Transverse colon (tissue), 4 donors: ENCODE measurements at regions of chr6 and their contacts with region 1.

Region 1: DNA sequence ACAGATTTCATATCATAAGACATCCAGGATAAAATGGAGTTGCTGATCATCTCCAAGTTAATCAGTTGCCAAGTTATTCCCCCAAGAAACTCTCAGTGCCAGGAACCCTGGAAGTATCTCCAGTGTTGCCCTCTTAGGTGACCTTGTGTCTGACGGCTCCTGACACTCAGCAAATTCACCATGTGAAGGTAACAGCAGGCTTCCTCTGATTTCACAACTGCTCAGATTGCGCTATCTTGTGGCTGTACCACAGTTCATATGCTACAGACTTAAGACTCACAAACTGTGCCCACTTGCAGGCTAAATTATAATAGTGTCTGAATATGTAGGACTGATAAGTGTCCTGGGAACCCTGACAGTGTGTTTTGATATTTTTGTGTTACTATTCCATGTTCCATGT is 186.6 kb upstream of the OPRM1 start:
- DNase-seq: no peak
- H3K4me3 ChIP-seq: no peak overlapping the region
- H3K27ac ChIP-seq: no peak overlapping the region
- H3K4me1 ChIP-seq: no peaks in the 10 kb centered on the region
- H3K27me3 ChIP-seq: no peaks in the 10 kb centered on the region
- CTCF ChIP-seq: no peak
- EP300 ChIP-seq: no peak
- POLR2A ChIP-seq: no peak

Region 2: GRCh38 chr6:153862927-153863326 is 10.4 kb after region 1 on chr6:
- in situ Hi-C with region 1: no loop called
- intact Hi-C with region 1: loop called (anchors 1 kb)
- DNase-seq: no peak
- H3K4me3 ChIP-seq: no peak overlapping the region
- H3K27ac ChIP-seq: no peak overlapping the region
- H3K4me1 ChIP-seq: no peaks in the 10 kb centered on the region
- H3K27me3 ChIP-seq: no peaks in the 10 kb centered on the region
- CTCF ChIP-seq: no peak
- EP300 ChIP-seq: no peak
- POLR2A ChIP-seq: no peak

Region 3: GRCh38 chr6:154092326-154092962 is 240.0 kb after region 1 on chr6:
- in situ Hi-C with region 1: no loop called
- intact Hi-C with region 1: no loop called
- DNase-seq: no peak
- H3K4me3 ChIP-seq: no peak overlapping the region
- H3K27ac ChIP-seq: no peak overlapping the region
- H3K4me1 ChIP-seq: no peaks in the 10 kb centered on the region
- H3K27me3 ChIP-seq: no peaks in the 10 kb centered on the region
- CTCF ChIP-seq: no peak
- EP300 ChIP-seq: no peak
- POLR2A ChIP-seq: no peak

Region 4: GRCh38 chr6:154848580-154848979 is 996.1 kb after region 1 on chr6:
- in situ Hi-C with region 1: no loop called
- intact Hi-C with region 1: no loop called
- DNase-seq: no peak
- H3K4me3 ChIP-seq: no peak overlapping the region
- H3K27ac ChIP-seq: no peak overlapping the region
- H3K4me1 ChIP-seq: peaks cover 0 to 3% (median 0%) of the 10 kb centered on the region in 4 donors
- H3K27me3 ChIP-seq: no peaks in the 10 kb centered on the region
- CTCF ChIP-seq: no peak
- EP300 ChIP-seq: no peak
- POLR2A ChIP-seq: no peak